Activated naive CD4-positive, alpha-beta T cell treated with anti-CD3 and anti-CD28 coated beads for 36 hours (primary cell): ENCODE measurements at regions of chr11 and their contacts with region 1.

Region 1: GRCh38 chr11:66081505-66081904 is 11.4 kb downstream of the PACS1 start:
- DNase-seq: peak; percentile 91
- H3K4me3 Mint-ChIP-seq: peak overlapping the region; percentile 78
- H3K27ac Mint-ChIP-seq: peak overlapping the region; percentile 98
- H3K4me1 Mint-ChIP-seq: peaks cover 92% of the 10 kb centered on the region
- H3K27me3 Mint-ChIP-seq: no peaks in the 10 kb centered on the region

Region 2: GRCh38 chr11:66100272-66101065 is 19.0 kb after region 1 on chr11:
- CTCF ChIA-PET with region 1: no interaction called
- intact Hi-C with region 1: loop called (anchors 1 kb)
- DNase-seq: peak; percentile 80
- H3K4me3 Mint-ChIP-seq: peak overlapping the region; percentile 72
- H3K27ac Mint-ChIP-seq: peak overlapping the region; percentile 92
- H3K4me1 Mint-ChIP-seq: peaks cover 63% of the 10 kb centered on the region
- H3K27me3 Mint-ChIP-seq: no peaks in the 10 kb centered on the region

Region 3: DNA sequence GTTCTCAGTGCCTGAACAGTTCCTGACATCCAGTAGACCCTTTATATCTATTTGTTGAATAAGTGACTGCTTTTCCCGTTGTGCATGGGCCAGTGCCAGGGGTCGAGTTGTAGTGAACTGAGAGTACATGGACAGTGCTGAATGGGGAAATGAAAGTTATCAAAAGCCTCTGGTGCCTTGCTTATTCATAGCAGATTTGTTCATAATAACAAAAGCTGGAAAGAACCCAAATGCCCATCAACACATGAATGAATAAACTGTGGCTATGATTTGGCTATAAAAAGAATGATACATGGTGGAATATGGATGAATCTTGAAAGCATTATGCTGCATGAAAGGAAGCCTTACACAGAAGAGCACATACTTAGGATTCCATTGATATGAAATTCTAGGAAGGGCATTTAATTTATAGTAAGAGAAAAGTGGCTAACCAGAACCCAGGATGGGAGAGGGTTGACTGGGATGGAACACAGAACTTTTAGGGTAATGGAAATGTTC is 31.1 kb after region 1 on chr11:
- CTCF ChIA-PET with region 1: interaction called, 6 read pairs
- intact Hi-C with region 1: loop called (anchors 1 kb)
- DNase-seq: no peak
- H3K4me3 Mint-ChIP-seq: no peak overlapping the region
- H3K27ac Mint-ChIP-seq: peak overlapping the region; percentile 88
- H3K4me1 Mint-ChIP-seq: peaks cover 95% of the 10 kb centered on the region
- H3K27me3 Mint-ChIP-seq: no peaks in the 10 kb centered on the region

Region 4: DNA sequence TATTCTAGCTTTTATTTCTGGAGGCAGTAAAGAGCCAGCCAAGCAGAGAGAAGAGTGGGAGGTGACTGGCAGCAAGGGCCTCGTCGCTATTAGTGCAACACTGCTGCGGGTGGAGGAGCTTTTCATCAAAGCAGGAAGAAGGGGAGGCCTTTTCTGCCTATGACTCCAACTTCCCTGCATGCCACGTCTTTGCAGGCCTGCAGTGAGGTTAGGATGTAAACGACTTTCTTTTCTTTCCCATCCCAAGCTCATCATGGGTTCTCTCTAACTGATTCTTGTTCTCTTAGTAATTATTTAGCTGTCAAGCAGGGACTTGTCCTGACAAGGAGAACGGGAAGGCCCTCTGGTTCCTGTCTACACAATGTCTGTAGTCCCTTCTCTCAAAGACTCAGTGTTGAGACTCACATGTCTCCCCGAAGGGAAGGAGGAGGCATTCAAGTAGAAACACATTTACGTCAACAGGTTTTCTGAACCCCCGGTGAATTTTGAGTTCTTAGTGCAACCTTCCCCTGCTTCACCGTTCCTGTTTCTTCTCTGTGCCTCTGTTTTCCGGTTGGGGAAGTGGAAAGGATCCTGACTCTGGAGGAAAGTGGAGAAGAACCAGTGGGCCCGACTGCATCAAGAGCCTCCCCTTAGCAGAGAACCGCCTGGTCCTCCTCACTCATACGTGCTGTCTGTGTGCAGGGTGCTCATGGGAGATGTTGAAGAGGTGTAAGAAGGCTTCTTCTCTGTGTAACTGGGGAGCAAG is 45.5 kb after region 1 on chr11:
- CTCF ChIA-PET with region 1: interaction called, 5 read pairs
- intact Hi-C with region 1: loop called (anchors 1 kb)
- DNase-seq: peak; percentile 86
- H3K4me3 Mint-ChIP-seq: peak overlapping the region; percentile 77
- H3K27ac Mint-ChIP-seq: peak overlapping the region; percentile 98
- H3K4me1 Mint-ChIP-seq: peaks cover 70% of the 10 kb centered on the region
- H3K27me3 Mint-ChIP-seq: no peaks in the 10 kb centered on the region

Region 5: GRCh38 chr11:66136752-66137123 is 55.2 kb after region 1 on chr11:
- CTCF ChIA-PET with region 1: interaction called, 11 read pairs
- intact Hi-C with region 1: no loop called
- DNase-seq: peak; percentile 47
- H3K4me3 Mint-ChIP-seq: no peak overlapping the region
- H3K27ac Mint-ChIP-seq: peak overlapping the region; percentile 66
- H3K4me1 Mint-ChIP-seq: peaks cover 66% of the 10 kb centered on the region
- H3K27me3 Mint-ChIP-seq: no peaks in the 10 kb centered on the region

Region 6: GRCh38 chr11:66231561-66231960 is 150.1 kb after region 1 on chr11:
- CTCF ChIA-PET with region 1: no interaction called
- intact Hi-C with region 1: no loop called
- DNase-seq: no peak
- H3K4me3 Mint-ChIP-seq: no peak overlapping the region
- H3K27ac Mint-ChIP-seq: no peak overlapping the region
- H3K4me1 Mint-ChIP-seq: peaks cover under 1% of the 10 kb centered on the region
- H3K27me3 Mint-ChIP-seq: no peaks in the 10 kb centered on the region